ENCODE measurements at regions of chr21 and their contacts with region 1.

Region 1: GRCh38 chr21:14686466-14687267 is 140.6 kb upstream of the SAMSN1 start:
- DNase-seq: no peak
- ATAC-seq: peak; percentile 35
- H3K4me3 Mint-ChIP-seq: peak overlapping the region; percentile 30
- H3K27ac Mint-ChIP-seq: peak overlapping the region; percentile 82
- H3K4me1 Mint-ChIP-seq: peaks cover 73% of the 10 kb centered on the region
- H3K27me3 Mint-ChIP-seq: no peaks in the 10 kb centered on the region
- CTCF ChIP-seq: no peak

Region 2: DNA sequence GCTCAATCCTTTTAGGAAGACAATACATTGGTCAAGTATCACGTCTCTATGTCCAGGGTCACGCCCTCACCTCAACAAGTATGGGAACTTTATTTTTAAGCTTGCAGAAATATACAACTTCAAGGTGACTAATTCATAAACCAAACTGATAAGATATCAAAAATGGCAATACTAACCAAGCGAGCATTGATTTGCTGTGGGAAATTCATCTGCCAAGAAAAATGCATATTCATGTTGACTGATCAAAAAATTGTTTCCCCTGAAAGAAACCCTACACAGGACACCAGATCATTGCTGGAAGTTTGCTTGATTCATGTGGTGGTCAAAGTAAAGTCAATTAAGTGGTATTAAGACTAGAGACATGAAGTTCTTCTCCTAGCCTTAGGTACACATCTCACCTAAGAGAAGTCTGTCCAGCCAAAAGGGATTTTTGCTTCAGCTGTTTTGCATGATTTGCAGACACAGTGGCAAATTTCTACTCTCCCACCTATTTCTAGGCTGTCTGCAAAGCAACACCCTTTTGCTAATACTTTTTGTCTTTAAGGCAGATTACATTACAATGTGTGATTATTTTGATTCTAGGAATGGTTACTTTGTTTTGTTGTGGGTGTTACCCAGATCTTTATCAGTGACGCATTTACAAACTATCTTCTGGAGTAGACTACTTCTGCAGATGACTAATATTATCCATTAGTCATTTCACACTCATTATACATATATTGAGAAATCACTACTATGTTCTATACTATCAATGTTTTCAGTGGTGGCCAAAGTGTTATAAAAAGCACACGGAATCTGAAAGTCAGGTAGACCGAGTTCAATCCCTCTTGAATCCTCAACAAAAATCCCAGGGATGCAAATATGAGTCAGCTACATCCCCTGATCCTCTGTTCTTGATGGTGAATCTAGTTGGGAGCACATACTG is 152.9 kb before region 1 on chr21:
- CTCF ChIA-PET with region 1: no interaction called
- POLR2A ChIA-PET with region 1: interaction called, 5 read pairs
- intact Hi-C with region 1: loop called (anchors 1 kb)
- DNase-seq: no peak
- ATAC-seq: peak; percentile 85
- H3K4me3 Mint-ChIP-seq: peak overlapping the region; percentile 71
- H3K27ac Mint-ChIP-seq: peak overlapping the region; percentile 98
- H3K4me1 Mint-ChIP-seq: peaks cover 79% of the 10 kb centered on the region
- H3K27me3 Mint-ChIP-seq: no peaks in the 10 kb centered on the region
- CTCF ChIP-seq: no peak

Region 3: DNA sequence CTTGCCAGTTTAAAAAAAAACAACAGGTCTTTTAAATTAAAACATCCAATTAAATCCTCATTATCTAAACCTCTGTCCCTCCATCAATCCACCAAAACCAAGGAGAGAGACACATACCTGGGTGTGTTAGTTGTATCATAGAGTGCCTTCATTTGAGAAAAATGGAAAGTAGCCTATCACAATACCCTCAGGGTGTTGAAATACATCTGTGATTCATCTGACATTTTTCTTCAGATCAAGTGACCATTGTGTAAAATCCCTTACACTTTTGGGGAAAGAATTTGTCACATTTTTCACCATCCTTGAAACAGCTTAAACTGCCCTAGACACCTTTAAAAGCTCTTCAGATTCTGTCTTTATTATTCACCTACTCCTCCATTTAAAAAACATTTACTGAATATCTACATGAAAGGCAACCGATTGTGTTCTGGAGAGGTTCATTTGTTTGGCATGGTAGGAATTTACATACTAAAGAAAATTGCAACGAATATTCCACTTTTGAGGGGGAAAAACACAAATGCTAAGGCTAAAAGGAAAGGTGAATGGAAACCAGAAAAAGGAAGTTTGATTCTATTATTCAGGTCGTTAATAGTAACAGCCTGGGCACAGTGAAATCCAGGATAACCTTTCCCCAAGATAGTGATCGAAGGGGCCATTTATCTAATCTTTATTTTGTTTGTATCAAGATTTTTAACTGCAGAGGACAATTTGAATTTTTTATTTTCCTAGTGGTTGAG is 70.2 kb before region 1 on chr21:
- CTCF ChIA-PET with region 1: no interaction called
- POLR2A ChIA-PET with region 1: no interaction called
- intact Hi-C with region 1: loop called (anchors 5 kb)
- DNase-seq: no peak
- ATAC-seq: peak; percentile 25
- H3K4me3 Mint-ChIP-seq: peak overlapping the region; percentile 49
- H3K27ac Mint-ChIP-seq: peak overlapping the region; percentile 78
- H3K4me1 Mint-ChIP-seq: peaks cover 37% of the 10 kb centered on the region
- H3K27me3 Mint-ChIP-seq: no peaks in the 10 kb centered on the region
- CTCF ChIP-seq: no peak

Region 4: GRCh38 chr21:14675774-14676530 is 10.7 kb before region 1 on chr21:
- CTCF ChIA-PET with region 1: interaction called, 3 read pairs
- POLR2A ChIA-PET with region 1: interaction called, 17 read pairs
- intact Hi-C with region 1: loop called (anchors 1 kb)
- DNase-seq: no peak
- ATAC-seq: peak; percentile 79
- H3K4me3 Mint-ChIP-seq: peak overlapping the region; percentile 46
- H3K27ac Mint-ChIP-seq: peak overlapping the region; percentile 90
- H3K4me1 Mint-ChIP-seq: peaks cover 60% of the 10 kb centered on the region
- H3K27me3 Mint-ChIP-seq: no peaks in the 10 kb centered on the region
- CTCF ChIP-seq: no peak

Region 5: GRCh38 chr21:14744368-14744767 is 57.7 kb after region 1 on chr21:
- CTCF ChIA-PET with region 1: no interaction called
- POLR2A ChIA-PET with region 1: no interaction called
- intact Hi-C with region 1: no loop called
- DNase-seq: no peak
- ATAC-seq: no peak
- H3K4me3 Mint-ChIP-seq: no peak overlapping the region
- H3K27ac Mint-ChIP-seq: no peak overlapping the region
- H3K4me1 Mint-ChIP-seq: no peaks in the 10 kb centered on the region
- H3K27me3 Mint-ChIP-seq: no peaks in the 10 kb centered on the region
- CTCF ChIP-seq: no peak

Region 6: DNA sequence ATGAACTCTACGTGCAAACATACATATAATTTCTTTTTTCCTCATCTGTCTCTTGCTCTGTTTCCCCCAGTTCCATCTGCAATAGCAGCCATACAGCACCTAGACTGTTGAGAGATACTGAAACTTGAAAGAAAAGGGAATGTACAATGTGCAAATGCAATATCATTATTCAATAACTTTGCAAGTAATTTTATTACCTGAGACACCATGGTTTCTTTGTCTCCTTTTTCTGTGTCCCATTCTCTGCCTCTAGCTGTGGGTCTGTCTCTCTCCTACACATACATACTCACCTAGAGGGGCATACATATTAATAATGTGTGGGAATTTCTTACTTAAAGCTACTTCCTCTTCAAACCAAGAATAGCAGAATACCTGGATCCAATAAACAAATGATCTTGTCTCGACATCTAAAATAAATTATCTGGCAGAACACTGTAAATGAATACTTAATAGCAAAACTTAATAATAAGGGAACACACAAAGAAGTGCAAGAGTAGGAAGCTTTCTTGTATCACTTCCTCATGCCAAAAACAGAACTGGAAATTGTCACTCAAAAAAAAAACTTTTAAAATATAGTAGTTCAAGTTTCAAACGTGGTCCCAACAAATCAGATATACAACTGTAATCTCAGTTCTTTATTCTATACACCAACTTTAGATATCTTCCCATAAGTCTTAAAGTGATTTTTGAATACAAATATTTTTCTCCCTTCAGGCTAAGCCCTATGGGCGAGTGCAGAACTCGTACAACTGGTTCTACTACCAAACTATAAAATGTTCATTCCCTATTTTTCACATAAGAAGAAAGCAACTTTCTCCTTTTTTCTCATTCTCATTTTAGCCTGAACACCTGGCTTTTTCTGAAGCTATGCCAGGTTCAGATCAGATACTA is 183.6 kb after region 1 on chr21:
- CTCF ChIA-PET with region 1: no interaction called
- POLR2A ChIA-PET with region 1: no interaction called
- intact Hi-C with region 1: loop called (anchors 5 kb)
- DNase-seq: no peak
- ATAC-seq: peak; percentile 66
- H3K4me3 Mint-ChIP-seq: peak overlapping the region; percentile 55
- H3K27ac Mint-ChIP-seq: peak overlapping the region; percentile 51
- H3K4me1 Mint-ChIP-seq: peaks cover 58% of the 10 kb centered on the region
- H3K27me3 Mint-ChIP-seq: no peaks in the 10 kb centered on the region
- CTCF ChIP-seq: no peak